HCT116 (cell line): ENCODE measurements at regions of chr12 and their contacts with region 1.

Region 1: GRCh38 chr12:52069327-52070184 is at the start of gene ATG101:
- DNase-seq: peak; percentile 94
- ATAC-seq: peak; percentile 95
- H3K4me3 ChIP-seq: peak within 1 kb of the TSS; percentile 91 to 99
- H3K27ac ChIP-seq: peak within 1 kb of the TSS; percentile 86
- H3K4me1 ChIP-seq: peaks cover 7 to 23% of the 10 kb centered on the region in 2 experiments
- H3K27me3 ChIP-seq: no peaks in the 10 kb centered on the region
- CTCF ChIP-seq: peak; percentile 68 to 78 (median 78)
- POLR2A ChIP-seq: no peak
- RAD21 ChIP-seq: no peak
- total RNA-seq, gene ATG101: 49.2 TPM

Region 2: GRCh38 chr12:52032804-52033502 is 36.6 kb before region 1 on chr12:
- CTCF ChIA-PET with region 1: interaction called, 4 read pairs
- POLR2A ChIA-PET with region 1: interaction called, 13 read pairs
- RAD21 ChIA-PET with region 1: no interaction called
- intact Hi-C with region 1: no loop called
- DNase-seq: peak; percentile 89
- ATAC-seq: peak; percentile 94
- H3K4me3 ChIP-seq: peak overlapping the region; percentile 29 to 47
- H3K27ac ChIP-seq: no peak overlapping the region
- H3K4me1 ChIP-seq: peaks cover 28 to 50% of the 10 kb centered on the region in 2 experiments
- H3K27me3 ChIP-seq: no peaks in the 10 kb centered on the region
- CTCF ChIP-seq: no peak
- POLR2A ChIP-seq: no peak
- RAD21 ChIP-seq: no peak

Region 3: GRCh38 chr12:52050761-52051541 is 18.6 kb before region 1 on chr12 and contains the start of gene NR4A1:
- CTCF ChIA-PET with region 1: interaction called, 7 read pairs
- POLR2A ChIA-PET with region 1: interaction called, 8 read pairs
- RAD21 ChIA-PET with region 1: no interaction called
- intact Hi-C with region 1: loop called (anchors 1 kb)
- DNase-seq: peak; percentile 87
- ATAC-seq: peak; percentile 82
- H3K4me3 ChIP-seq: peak within 1 kb of the TSS; percentile 62 to 86
- H3K27ac ChIP-seq: peak within 1 kb of the TSS; percentile 92
- H3K4me1 ChIP-seq: peaks cover 22 to 48% of the 10 kb centered on the region in 2 experiments
- H3K27me3 ChIP-seq: no peaks in the 10 kb centered on the region
- CTCF ChIP-seq: 0 out of 6 replicates have a peak, but pooled peaks of 1 of the 3 experiments have one; percentile 11
- POLR2A ChIP-seq: peak; percentile 63
- RAD21 ChIP-seq: no peak
- total RNA-seq, gene NR4A1: 35.3 TPM

Region 4: DNA sequence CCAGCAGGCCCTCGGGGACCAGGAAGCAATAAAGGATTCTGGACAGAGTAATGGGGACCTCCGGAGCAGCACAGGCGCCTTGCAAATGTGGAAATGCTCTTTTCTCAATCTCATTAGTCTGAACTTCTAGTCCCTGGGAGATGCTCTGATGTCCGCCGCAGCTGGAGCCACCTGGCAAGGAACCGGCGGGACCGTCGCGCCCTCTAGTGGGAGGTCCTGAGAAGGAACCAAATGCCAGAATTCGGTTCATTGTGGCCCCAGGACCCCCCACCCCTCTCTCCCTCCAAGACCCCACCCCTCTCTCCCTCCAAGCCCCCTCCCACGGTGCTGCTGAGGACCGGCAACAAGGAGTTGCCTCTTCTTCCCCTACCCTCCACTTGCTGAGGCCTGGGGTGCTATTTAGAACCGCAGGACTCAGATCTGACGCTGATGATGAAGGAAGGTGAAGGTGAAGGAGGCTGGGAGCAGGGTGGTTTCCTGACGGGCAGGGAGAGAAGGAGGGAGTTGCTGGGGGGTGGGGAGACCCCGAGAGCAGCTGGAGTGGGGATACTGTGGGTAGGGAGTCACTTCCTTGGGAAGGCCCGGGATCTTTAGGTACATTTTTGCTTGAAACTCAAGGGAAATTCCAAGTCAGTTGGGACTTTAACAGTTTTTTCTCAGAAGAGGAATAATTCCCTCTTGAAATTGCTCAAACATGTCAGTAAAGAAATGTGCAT is 52.4 kb after region 1 on chr12:
- CTCF ChIA-PET with region 1: interaction called, 16 read pairs
- POLR2A ChIA-PET with region 1: no interaction called
- RAD21 ChIA-PET with region 1: interaction called in 1 of 2 experiments, 4 read pairs
- intact Hi-C with region 1: no loop called
- DNase-seq: no peak
- ATAC-seq: peak; percentile 58
- H3K4me3 ChIP-seq: no peak overlapping the region
- H3K27ac ChIP-seq: no peak overlapping the region
- H3K4me1 ChIP-seq: peaks cover 0 to 18% of the 10 kb centered on the region in 2 experiments; a peak in 2 of 4 replicates
- H3K27me3 ChIP-seq: no peaks in the 10 kb centered on the region
- CTCF ChIP-seq: peak; percentile 70 to 83 (median 80)
- POLR2A ChIP-seq: no peak
- RAD21 ChIP-seq: peak; percentile 72